ENCODE measurements at regions of chr10 and their contacts with region 1.

Region 1: DNA sequence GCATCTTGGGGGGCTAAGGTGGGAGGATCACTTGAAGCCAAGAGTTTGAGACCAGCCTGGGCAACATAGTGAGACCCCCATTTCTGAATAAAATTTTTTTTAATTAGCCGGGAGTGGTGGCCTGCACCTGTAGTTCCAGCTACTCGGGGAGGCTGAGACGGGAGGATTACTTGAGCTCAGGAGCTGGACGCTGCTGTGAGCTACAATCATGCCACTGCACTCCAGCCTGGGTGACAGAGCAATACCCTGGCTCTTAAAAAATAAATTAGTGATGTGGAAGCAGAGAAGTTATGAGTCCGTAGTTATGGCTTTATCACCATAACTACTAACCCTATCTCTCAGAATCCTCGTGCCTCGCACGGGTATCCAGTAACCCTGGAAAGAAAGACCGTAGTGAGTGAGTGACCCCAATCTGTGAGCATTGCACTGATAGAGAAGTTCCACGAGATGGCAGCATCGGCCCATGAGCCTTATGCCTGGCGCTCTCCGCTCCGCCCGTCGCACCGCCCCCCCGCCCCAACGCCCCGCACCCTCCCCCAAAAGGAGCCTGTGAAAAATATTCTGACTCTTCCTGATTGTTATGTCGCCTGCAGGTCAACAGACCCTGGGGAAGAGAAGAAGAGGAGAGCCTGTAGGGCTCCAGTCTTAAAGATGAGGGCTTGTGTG is 4.9 kb upstream of the SLC29A3 start:
- DNase-seq: no peak
- H3K4me3 ChIP-seq: peak overlapping the region in 1 of 8 donors; percentile 15
- H3K27ac ChIP-seq: peak overlapping the region in 6 of 8 donors; percentile 26 to 70 (median 62)
- H3K4me1 ChIP-seq: peaks cover 5 to 41% (median 25%) of the 10 kb centered on the region in 6 donors
- H3K27me3 ChIP-seq: peaks cover 0 to 5% (median 0%) of the 10 kb centered on the region in 7 donors
- CTCF ChIP-seq: peak; percentile 57 to 93 (median 82)
- POLR2A ChIP-seq: no peak

Region 2: GRCh38 chr10:71561003-71561574 is 246.9 kb after region 1 on chr10:
- intact Hi-C with region 1: no loop called
- DNase-seq: no peak
- H3K4me3 ChIP-seq: no peak overlapping the region
- H3K27ac ChIP-seq: no peak overlapping the region
- H3K4me1 ChIP-seq: peaks cover 0 to 4% (median 0%) of the 10 kb centered on the region in 6 donors
- H3K27me3 ChIP-seq: peaks cover 0 to 10% (median 0%) of the 10 kb centered on the region in 7 donors
- CTCF ChIP-seq: no peak
- POLR2A ChIP-seq: no peak

Region 3: DNA sequence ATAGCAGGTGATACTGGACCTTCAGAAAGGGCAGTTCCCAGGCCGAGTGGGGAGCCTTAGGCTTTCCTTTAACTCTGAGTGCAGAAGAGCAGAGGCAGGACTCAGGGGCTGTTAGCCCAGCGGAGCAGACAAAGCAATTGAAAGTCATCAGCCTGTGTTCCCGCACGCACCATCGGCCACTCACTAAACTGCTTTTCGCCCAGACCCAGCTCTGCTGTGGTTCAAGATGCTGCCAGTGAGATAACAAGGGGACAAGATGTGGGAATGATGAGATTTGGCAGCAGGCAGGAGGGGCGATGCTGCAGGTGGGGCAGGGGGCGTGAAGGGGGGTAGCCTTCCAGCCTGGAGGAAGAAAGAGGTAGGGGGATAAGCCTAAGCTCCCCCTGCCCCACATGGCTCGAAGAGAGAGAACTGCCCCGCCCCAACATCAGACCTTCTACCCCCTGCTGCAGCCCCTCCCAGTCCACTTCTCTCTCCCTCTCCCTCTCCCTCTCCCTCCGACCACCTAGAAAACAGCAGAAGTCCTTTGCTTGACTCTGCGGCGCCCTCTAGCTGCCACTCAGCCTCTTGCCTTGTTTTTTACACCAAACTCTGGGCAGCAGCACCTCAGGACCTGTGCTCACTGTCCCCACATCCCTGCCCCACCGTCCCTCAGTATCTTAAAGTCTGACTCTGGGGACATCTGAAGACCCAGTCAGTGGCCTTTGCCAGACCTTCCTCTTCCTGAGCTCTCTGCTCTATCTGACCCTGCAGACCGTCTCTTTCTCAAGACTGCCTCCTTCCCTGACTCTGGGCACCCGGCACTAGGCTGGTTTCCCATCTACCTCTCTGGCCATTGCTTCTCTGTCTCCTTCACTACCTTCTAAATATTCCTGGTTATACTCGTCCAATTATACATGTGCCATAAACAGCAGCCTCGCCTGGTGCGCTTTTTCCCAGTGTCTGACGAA is 294.9 kb after region 1 on chr10:
- intact Hi-C with region 1: loop called (anchors 5 kb)
- DNase-seq: peak; percentile 91
- H3K4me3 ChIP-seq: no peak overlapping the region
- H3K27ac ChIP-seq: no peak overlapping the region
- H3K4me1 ChIP-seq: peaks cover 3 to 24% (median 13%) of the 10 kb centered on the region in 6 donors
- H3K27me3 ChIP-seq: peaks cover 0 to 20% (median 0%) of the 10 kb centered on the region in 7 donors
- CTCF ChIP-seq: peak; percentile 47 to 90 (median 75)
- POLR2A ChIP-seq: no peak

Measured in spleen (tissue), 13 donors.